Mammary epithelial cell (primary cell): ENCODE measurements at regions of chr9 and their contacts with region 1.

Region 1: DNA sequence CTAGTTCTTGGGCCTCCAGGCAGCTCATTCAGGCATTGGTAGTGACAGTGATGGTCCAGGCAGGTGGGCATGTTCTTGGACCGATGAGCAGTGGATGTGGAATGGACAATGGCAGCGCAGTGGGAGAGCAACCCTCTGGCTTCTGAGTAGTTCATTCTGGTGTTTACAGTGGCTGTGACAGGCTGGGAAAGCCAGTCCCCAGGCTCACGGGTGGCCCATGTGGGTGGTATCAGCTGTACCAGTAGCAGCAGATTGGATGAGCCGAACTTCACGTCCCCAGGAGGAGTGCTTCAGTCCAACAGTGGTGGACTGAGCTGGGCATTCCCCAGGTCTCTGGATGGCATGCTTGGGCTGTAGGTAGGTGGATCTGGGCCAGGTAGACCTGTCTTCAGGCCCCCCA is 515.6 kb upstream of the ACO1 start:
- DNase-seq: no peak
- H3K4me3 ChIP-seq: no peak overlapping the region
- H3K27ac ChIP-seq: no peak overlapping the region
- H3K4me1 ChIP-seq: no peaks in the 10 kb centered on the region
- H3K27me3 ChIP-seq: no peaks in the 10 kb centered on the region
- CTCF ChIP-seq: no peak

Region 2: DNA sequence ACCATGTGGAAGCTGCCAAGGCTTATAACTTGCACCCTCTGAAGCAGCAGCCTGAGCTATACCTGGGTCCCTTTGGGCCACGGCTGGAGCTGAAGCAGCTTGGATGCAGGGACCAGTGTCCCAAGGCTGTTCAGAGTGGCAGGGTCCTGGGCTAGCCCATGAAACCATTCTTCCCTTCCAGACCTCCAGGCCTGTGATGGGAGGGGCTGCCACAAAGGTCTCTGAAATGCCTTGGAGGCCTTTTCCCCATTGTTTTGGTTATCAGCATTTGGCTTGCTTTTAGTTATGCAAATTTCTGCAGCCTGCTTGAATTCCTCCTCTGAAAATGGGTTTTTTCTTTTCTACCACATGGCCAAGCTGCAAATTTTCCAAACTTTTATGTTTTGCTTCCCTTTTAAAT is 81.9 kb after region 1 on chr9:
- CTCF ChIA-PET with region 1: no interaction called
- dilution Hi-C with region 1: no loop called
- in situ Hi-C with region 1: loop called in 1 of 2 experiments (anchors 25 kb)
- intact Hi-C with region 1: no loop called
- DNase-seq: no peak
- H3K4me3 ChIP-seq: no peak overlapping the region
- H3K27ac ChIP-seq: no peak overlapping the region
- H3K4me1 ChIP-seq: no peaks in the 10 kb centered on the region
- H3K27me3 ChIP-seq: no peaks in the 10 kb centered on the region
- CTCF ChIP-seq: no peak

Region 3: GRCh38 chr9:32067261-32067660 is 198.4 kb after region 1 on chr9:
- CTCF ChIA-PET with region 1: no interaction called
- dilution Hi-C with region 1: no loop called
- in situ Hi-C with region 1: no loop called
- intact Hi-C with region 1: no loop called
- DNase-seq: no peak
- H3K4me3 ChIP-seq: no peak overlapping the region
- H3K27ac ChIP-seq: no peak overlapping the region
- H3K4me1 ChIP-seq: no peaks in the 10 kb centered on the region
- H3K27me3 ChIP-seq: no peaks in the 10 kb centered on the region
- CTCF ChIP-seq: no peak

Region 4: GRCh38 chr9:32344551-32345182 is 475.8 kb after region 1 on chr9:
- CTCF ChIA-PET with region 1: no interaction called
- dilution Hi-C with region 1: no loop called
- in situ Hi-C with region 1: loop called in 1 of 2 experiments (anchors 25 kb)
- intact Hi-C with region 1: no loop called
- DNase-seq: peak; percentile 53
- H3K4me3 ChIP-seq: peak overlapping the region; percentile 2 to 39 (median 14)
- H3K27ac ChIP-seq: no peak overlapping the region
- H3K4me1 ChIP-seq: no peaks in the 10 kb centered on the region
- H3K27me3 ChIP-seq: no peaks in the 10 kb centered on the region
- CTCF ChIP-seq: no peak